ENCODE measurements at regions of chr2 and their contacts with region 1.

Region 1: DNA sequence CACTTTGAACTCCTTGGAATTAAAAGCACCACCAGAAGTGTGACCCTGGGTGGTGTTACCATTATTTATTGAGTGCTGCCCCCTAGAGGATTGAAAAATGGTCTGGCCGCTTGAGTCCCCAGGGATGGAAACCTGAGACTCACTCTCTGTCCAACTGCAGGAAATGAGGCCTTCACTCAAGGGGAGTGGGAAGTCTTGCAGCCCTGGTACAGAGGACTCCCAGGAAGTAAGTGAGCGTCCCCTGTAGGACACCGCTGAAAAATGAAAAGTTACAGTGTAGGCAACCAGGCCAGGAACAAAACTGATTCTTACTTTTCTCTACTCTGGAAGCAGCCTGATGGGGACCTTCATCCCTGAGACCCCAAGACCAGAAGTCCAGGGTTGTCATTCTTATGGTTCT is 2.2 kb upstream of the NRP2 start:
- DNase-seq: peak; percentile 95
- H3K4me3 Mint-ChIP-seq: no peak overlapping the region
- H3K27ac Mint-ChIP-seq: no peak overlapping the region
- H3K4me1 Mint-ChIP-seq: peaks cover 25% of the 10 kb centered on the region
- H3K27me3 Mint-ChIP-seq: no peaks in the 10 kb centered on the region
- CTCF ChIP-seq: peak; percentile 61

Region 2: DNA sequence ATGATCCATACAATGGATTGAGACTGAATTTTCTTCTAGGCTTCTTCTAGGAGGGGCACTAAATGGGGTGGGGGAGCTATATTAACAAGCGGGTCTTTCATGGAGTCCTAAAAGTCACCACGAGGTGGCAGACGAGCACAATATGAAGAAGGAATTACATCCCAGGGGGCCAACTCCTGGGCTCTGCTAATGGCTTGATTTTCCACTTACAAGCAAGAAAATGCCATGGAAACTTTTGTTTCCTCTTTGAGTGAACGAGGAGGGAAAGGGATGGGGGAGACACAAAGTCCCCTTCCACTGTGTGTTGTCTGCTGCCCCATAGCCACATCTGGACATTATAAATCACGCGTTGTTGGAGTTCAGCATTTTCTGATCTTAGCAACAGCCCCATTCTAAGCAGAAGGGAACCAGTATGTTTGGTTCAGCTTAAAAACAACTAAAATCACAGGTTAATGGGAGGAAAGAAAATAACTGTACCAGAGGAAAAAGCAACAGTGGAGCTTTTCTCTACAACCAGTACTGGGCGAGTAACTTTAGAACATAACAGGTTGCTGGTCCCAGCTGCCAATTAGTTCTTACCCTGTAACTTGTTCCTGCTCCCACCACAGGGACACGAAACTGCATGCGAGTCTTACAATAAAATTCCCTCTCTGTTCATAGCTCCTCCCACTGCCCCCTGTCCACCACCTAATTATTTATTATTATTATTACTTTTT is 1419.7 kb before region 1 on chr2:
- CTCF ChIA-PET with region 1: interaction called, 8 read pairs
- POLR2A ChIA-PET with region 1: no interaction called
- intact Hi-C with region 1: loop called (anchors 2 kb)
- DNase-seq: peak; percentile 71
- H3K4me3 Mint-ChIP-seq: no peak overlapping the region
- H3K27ac Mint-ChIP-seq: no peak overlapping the region
- H3K4me1 Mint-ChIP-seq: peaks cover 6% of the 10 kb centered on the region
- H3K27me3 Mint-ChIP-seq: no peaks in the 10 kb centered on the region
- CTCF ChIP-seq: peak; percentile 81

Region 3: DNA sequence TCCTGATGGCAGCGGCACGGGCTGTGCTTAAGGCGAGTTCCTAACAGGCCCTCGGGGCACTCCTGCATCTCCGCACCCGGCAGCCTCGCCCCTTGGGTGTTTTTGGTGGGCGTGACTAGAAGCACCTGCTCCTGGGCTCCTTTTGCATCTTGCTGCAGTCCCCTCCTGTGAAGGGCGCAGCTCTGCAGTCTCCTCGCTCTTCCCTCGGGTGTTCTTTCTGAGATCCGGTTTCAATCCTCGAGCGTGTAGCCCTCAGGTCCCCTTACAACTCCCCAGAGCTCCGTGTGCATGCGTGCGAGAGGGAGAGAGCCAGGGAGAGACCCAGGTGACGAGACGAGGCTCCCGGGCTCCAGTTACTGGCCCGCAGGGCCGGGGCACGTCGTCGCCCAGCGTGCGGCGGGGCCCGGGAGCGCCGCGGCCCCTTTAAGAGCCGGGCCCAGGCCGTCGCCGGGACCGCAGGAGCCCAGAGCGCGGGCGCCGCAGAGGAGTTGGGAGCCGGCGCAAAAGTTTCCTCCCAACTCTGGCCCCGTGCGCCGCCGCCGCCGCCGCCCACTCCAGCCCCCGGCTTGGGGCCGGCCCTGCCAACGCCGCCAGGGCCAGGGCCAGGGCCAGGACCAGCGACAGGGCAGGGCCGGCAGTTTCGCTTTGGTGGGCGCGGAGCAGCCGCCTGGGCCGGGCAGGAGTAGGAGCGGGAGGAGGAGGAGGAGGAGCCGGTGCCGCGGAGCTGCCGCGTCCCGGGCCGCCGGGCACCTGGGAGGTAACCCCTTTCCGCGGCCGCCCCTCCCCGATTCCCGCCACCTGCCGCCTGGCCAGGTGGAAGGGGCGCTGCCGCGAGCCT is 1134.8 kb before region 1 on chr2 and contains the start of gene PARD3B:
- CTCF ChIA-PET with region 1: interaction called, 4 read pairs
- POLR2A ChIA-PET with region 1: no interaction called
- intact Hi-C with region 1: loop called (anchors 10 kb)
- DNase-seq: peak; percentile 66
- H3K4me3 Mint-ChIP-seq: peak within 1 kb of the TSS; percentile 88
- H3K27ac Mint-ChIP-seq: peak within 1 kb of the TSS; percentile 88
- H3K4me1 Mint-ChIP-seq: peaks cover 8% of the 10 kb centered on the region
- H3K27me3 Mint-ChIP-seq: no peaks in the 10 kb centered on the region
- CTCF ChIP-seq: no peak
- total RNA-seq, gene PARD3B: 8.4 and 11.6 TPM in 2 replicates

Region 4: DNA sequence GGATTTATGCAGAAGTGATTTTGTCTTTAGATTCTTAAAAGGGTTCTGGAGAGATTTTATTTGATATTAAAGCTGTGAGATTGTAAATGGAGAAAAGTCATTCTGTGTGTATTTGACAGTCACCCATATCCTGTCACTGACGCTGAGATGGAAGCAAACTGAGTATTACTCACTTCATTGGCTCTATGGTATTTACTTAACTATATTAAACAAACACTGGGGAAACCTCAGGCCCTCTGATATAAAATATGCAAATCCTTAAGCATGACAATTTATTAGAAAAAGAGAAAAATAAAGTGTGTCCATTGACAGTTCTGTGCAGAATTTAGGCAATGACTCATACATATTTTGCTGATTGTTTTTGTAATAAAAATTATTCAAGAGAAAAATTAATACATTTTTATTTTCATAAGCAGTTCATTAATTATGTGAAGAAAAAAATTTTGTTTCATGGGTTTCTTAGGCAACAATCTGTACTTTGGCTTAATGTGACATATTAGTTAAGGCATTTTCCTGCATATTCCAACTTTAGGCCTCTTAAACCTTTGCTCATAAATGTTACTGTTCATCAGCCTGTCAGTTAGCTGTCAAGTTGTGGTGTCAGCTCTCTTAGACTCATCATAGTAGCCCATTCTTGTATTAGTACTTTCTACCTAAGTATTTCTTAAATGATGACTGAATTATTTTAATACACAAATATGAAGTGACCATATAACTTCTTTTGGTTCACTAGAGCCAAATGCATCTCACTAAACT is 1034.9 kb before region 1 on chr2:
- CTCF ChIA-PET with region 1: no interaction called
- POLR2A ChIA-PET with region 1: no interaction called
- intact Hi-C with region 1: no loop called
- DNase-seq: peak; percentile 28
- H3K4me3 Mint-ChIP-seq: no peak overlapping the region
- H3K27ac Mint-ChIP-seq: peak overlapping the region; percentile 55
- H3K4me1 Mint-ChIP-seq: peaks cover 19% of the 10 kb centered on the region
- H3K27me3 Mint-ChIP-seq: no peaks in the 10 kb centered on the region
- CTCF ChIP-seq: no peak

Region 5: DNA sequence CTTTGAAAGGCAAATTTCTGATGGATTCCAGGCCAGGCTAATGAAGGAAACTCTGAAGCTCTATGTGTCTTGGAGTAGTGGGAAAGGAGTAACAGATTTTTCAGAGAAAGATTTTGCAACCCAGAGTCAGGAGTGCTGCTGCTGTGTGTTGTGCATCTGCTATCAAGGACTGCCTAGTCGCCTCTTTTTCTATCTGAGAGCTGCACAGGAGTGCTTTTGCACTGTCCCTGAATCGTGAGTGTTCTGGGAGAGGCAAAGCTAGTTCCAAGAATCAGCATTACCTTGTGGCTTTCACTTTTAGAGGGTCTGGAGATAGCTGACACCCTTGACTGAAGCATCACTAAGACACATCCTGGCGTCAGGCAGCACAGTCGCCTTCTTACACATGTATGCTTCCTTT is 798.4 kb before region 1 on chr2:
- CTCF ChIA-PET with region 1: interaction called, 11 read pairs
- POLR2A ChIA-PET with region 1: interaction called, 3 read pairs
- intact Hi-C with region 1: no loop called
- DNase-seq: no peak
- H3K4me3 Mint-ChIP-seq: no peak overlapping the region
- H3K27ac Mint-ChIP-seq: no peak overlapping the region
- H3K4me1 Mint-ChIP-seq: no peaks in the 10 kb centered on the region
- H3K27me3 Mint-ChIP-seq: no peaks in the 10 kb centered on the region
- CTCF ChIP-seq: no peak

Region 6: GRCh38 chr2:205748639-205749477 is 68.8 kb after region 1 on chr2:
- CTCF ChIA-PET with region 1: interaction called, 5 read pairs
- POLR2A ChIA-PET with region 1: interaction called, 3 read pairs
- intact Hi-C with region 1: loop called (anchors 5 kb)
- DNase-seq: peak; percentile 90
- H3K4me3 Mint-ChIP-seq: no peak overlapping the region
- H3K27ac Mint-ChIP-seq: peak overlapping the region; percentile 56
- H3K4me1 Mint-ChIP-seq: peaks cover 53% of the 10 kb centered on the region
- H3K27me3 Mint-ChIP-seq: no peaks in the 10 kb centered on the region
- CTCF ChIP-seq: no peak

Region 7: GRCh38 chr2:205925373-205926337 is 245.6 kb after region 1 on chr2:
- CTCF ChIA-PET with region 1: interaction called, 13 read pairs
- POLR2A ChIA-PET with region 1: no interaction called
- intact Hi-C with region 1: loop called (anchors 2 kb)
- DNase-seq: peak; percentile 73
- H3K4me3 Mint-ChIP-seq: peak overlapping the region; percentile 38
- H3K27ac Mint-ChIP-seq: no peak overlapping the region
- H3K4me1 Mint-ChIP-seq: no peaks in the 10 kb centered on the region
- H3K27me3 Mint-ChIP-seq: peaks cover 44% of the 10 kb centered on the region
- CTCF ChIP-seq: peak; percentile 93

Measured in MCF 10A (cell line).